Caco-2 (cell line): ENCODE measurements at regions of chr3 and their contacts with region 1.

Region 1: GRCh38 chr3:49929331-49930240 is at the start of gene MON1A:
- DNase-seq: peak; percentile 97 to 99
- H3K4me3 ChIP-seq: peak within 1 kb of the TSS; percentile 60
- H3K4me3 Mint-ChIP-seq: peak within 1 kb of the TSS; percentile 97
- H3K27ac Mint-ChIP-seq: peak within 1 kb of the TSS; percentile 94
- H3K4me1 ChIP-seq: peaks cover 21% of the 10 kb centered on the region
- H3K4me1 Mint-ChIP-seq: peaks cover 8% of the 10 kb centered on the region
- H3K27me3 ChIP-seq: no peaks in the 10 kb centered on the region
- H3K27me3 Mint-ChIP-seq: no peaks in the 10 kb centered on the region
- CTCF ChIP-seq: peak; percentile 33 to 45
- total RNA-seq, gene MON1A: 7.4 and 7.7 TPM in 2 replicates

Region 2: DNA sequence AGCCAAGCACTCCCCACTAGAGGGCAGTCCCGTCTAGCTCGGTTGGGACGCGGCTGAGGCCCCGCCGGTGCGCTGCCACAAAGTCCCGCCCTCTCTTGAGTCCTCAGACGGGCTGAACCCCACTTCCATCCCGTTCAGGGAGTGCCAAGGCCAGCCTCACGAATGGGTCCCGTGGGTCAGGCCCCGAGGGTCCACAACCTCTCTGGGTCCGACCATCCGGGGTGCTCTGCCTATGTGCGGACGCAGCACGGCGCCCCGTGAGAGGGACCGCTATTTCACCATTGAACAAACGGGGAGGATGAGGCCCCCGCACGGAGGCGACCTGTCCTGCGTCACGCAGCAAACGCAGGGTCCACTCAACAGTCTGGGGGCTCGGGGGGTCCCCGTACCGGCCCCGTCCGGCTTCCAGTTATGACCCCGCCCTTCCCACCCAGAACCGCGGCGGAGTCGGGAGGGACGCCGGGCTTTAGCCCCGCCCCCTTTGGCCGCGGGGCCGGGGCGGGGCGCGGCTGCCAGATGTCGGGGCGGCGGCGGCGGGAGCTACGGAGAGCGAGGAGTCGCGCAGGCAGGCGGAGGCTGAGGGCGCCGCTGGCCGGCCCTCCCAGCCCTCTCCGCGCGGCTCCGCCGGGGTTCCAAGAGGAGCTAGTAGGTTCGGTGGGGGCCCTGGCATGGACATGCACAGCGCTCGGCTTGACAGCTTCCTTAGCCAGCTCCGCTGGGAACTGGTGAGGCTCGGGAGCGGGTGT is 126.7 kb before region 1 on chr3 and contains the start of gene INKA1:
- CTCF ChIA-PET with region 1: interaction called, 14 read pairs
- POLR2A ChIA-PET with region 1: interaction called, 3 read pairs
- intact Hi-C with region 1: no loop called
- DNase-seq: peak; percentile 82 to 89
- H3K4me3 ChIP-seq: peak within 1 kb of the TSS; percentile 74
- H3K4me3 Mint-ChIP-seq: peak within 1 kb of the TSS; percentile 91
- H3K27ac Mint-ChIP-seq: peak within 1 kb of the TSS; percentile 71
- H3K4me1 ChIP-seq: no peaks in the 10 kb centered on the region
- H3K4me1 Mint-ChIP-seq: peaks cover 16% of the 10 kb centered on the region
- H3K27me3 ChIP-seq: no peaks in the 10 kb centered on the region
- H3K27me3 Mint-ChIP-seq: peaks cover 2% of the 10 kb centered on the region
- CTCF ChIP-seq: peak; percentile 78 to 88
- total RNA-seq, gene INKA1: not detected in 2 replicates

Region 3: DNA sequence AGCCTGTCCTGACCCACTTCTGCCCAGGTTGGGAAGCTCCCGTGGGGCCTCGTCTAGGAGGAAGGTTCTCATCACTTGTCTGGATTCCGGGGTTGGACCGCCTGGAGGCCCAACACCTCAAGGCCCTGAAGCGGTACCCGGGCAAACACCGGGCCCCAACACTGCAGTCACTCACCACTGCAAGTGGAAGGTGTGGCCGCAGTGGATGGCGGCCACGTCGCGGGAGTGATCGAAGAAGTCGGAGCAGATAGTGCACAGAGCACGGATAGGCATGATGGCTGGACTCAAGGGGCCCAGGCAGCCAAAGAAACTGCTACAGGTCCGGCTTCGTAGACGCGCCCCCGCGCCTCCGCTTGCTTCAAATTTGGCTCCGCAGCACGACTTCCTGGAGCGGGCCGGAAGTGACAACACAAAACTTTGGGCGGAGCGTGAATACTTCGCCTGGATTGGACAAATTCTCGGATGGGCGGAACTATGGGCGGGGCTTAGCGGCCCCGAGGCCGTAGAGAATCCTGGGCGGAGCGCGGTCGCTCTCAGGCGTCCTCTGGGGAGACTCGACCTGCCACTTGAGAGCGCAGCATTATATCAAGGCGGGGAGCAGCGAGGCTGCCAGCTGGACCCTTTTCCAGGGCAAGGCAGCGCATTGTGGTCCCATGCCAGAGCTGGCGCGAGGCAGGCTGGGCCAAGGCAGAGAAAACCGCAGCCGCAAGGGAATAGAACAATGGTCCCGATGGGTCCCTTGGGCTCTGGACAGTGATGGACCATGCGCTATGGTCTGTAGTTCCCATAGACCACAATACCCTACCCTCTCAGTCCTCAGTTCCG is 73.2 kb before region 1 on chr3 and contains the start of gene TRAIP:
- CTCF ChIA-PET with region 1: interaction called, 3 read pairs
- POLR2A ChIA-PET with region 1: no interaction called
- intact Hi-C with region 1: loop called (anchors 1 kb)
- DNase-seq: peak; percentile 92 to 94
- H3K4me3 ChIP-seq: peak within 1 kb of the TSS; percentile 87
- H3K4me3 Mint-ChIP-seq: peak within 1 kb of the TSS; percentile 93
- H3K27ac Mint-ChIP-seq: peak within 1 kb of the TSS; percentile 88
- H3K4me1 ChIP-seq: 0 out of 2 replicates have a peak, but pooled peaks cover 4% of the 10 kb centered on the region
- H3K4me1 Mint-ChIP-seq: peaks cover 6% of the 10 kb centered on the region
- H3K27me3 ChIP-seq: no peaks in the 10 kb centered on the region
- H3K27me3 Mint-ChIP-seq: no peaks in the 10 kb centered on the region
- CTCF ChIP-seq: no peak
- total RNA-seq, gene TRAIP: 25.1 and 28.0 TPM in 2 replicates

Region 4: GRCh38 chr3:49914906-49915305 is 14.7 kb before region 1 on chr3:
- CTCF ChIA-PET with region 1: interaction called, 7 read pairs
- POLR2A ChIA-PET with region 1: interaction called, 14 read pairs
- intact Hi-C with region 1: no loop called
- DNase-seq: no peak
- H3K4me3 ChIP-seq: no peak overlapping the region
- H3K4me3 Mint-ChIP-seq: no peak overlapping the region
- H3K27ac Mint-ChIP-seq: no peak overlapping the region
- H3K4me1 ChIP-seq: peaks cover 11% of the 10 kb centered on the region
- H3K4me1 Mint-ChIP-seq: no peaks in the 10 kb centered on the region
- H3K27me3 ChIP-seq: no peaks in the 10 kb centered on the region
- H3K27me3 Mint-ChIP-seq: no peaks in the 10 kb centered on the region
- CTCF ChIP-seq: no peak

Region 5: DNA sequence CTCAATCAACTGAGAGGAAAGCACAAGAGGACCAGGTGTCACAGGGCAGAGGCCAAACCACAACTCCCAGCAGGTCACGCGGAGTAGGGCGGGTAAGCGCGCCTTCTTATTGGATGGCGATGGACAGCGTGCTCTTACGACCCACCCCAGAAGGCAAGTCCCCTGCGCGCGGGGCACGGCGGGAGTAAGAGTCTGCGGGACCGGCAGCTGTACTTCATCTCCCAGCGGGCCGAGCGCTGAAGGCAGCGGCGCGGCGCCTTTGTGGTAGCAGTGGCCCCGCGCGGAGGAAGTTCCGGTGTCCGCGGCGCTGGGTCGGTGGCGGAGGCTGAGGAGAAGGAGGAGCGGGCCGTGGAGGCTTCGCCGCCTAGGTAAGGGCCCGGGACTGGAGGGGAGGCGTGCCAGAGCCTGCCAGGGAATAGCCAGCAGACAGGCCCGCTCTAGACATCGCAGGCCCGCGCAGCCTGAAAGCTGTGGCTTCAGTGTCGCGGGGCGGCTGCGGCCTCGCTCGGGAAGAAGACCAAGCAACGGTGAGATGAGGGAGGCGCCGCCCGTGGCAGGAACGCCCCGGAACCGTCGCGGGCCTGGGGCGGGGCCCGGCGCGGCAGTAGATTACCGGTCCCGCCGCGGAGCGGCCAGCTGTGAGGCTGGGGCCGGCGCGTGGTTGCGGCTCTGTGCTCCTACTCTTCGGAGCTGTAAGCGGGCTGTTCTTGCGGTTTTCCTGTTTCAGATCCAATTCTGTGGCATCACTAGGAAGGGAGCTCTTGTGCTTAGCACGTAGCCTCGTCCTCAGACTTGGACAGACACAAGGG is 10.5 kb after region 1 on chr3 and contains the start of gene RBM6:
- CTCF ChIA-PET with region 1: interaction called, 13 read pairs
- POLR2A ChIA-PET with region 1: interaction called, 41 read pairs
- intact Hi-C with region 1: loop called (anchors 1 kb)
- DNase-seq: peak; percentile 97 to 98
- H3K4me3 ChIP-seq: peak within 1 kb of the TSS; percentile 68
- H3K4me3 Mint-ChIP-seq: peak within 1 kb of the TSS; percentile 81
- H3K27ac Mint-ChIP-seq: peak within 1 kb of the TSS; percentile 81
- H3K4me1 ChIP-seq: peaks cover 3% of the 10 kb centered on the region; the same call in 1 of the 2 replicates
- H3K4me1 Mint-ChIP-seq: no peaks in the 10 kb centered on the region
- H3K27me3 ChIP-seq: no peaks in the 10 kb centered on the region
- H3K27me3 Mint-ChIP-seq: no peaks in the 10 kb centered on the region
- CTCF ChIP-seq: no peak
- total RNA-seq, gene RBM6: 69.8 and 74.1 TPM in 2 replicates

Region 6: GRCh38 chr3:50044976-50045375 is 115.4 kb after region 1 on chr3:
- CTCF ChIA-PET with region 1: no interaction called
- POLR2A ChIA-PET with region 1: no interaction called
- intact Hi-C with region 1: no loop called
- DNase-seq: no peak
- H3K4me3 ChIP-seq: no peak overlapping the region
- H3K4me3 Mint-ChIP-seq: no peak overlapping the region
- H3K27ac Mint-ChIP-seq: no peak overlapping the region
- H3K4me1 ChIP-seq: no peaks in the 10 kb centered on the region
- H3K4me1 Mint-ChIP-seq: no peaks in the 10 kb centered on the region
- H3K27me3 ChIP-seq: no peaks in the 10 kb centered on the region
- H3K27me3 Mint-ChIP-seq: no peaks in the 10 kb centered on the region
- CTCF ChIP-seq: no peak